A673 (cell line): ENCODE measurements at regions of chr11 and their contacts with region 1.

Region 1: GRCh38 chr11:130580372-130580771 is 131.9 kb downstream of the ADAMTS15 start:
- DNase-seq: peak; percentile 84
- H3K4me3 ChIP-seq: no peak overlapping the region
- H3K27ac ChIP-seq: no peak overlapping the region
- H3K4me1 ChIP-seq: peaks cover 15% of the 10 kb centered on the region
- H3K27me3 ChIP-seq: no peaks in the 10 kb centered on the region
- CTCF ChIP-seq: no peak

Region 2: GRCh38 chr11:130644187-130644586 is 63.8 kb after region 1 on chr11:
- CTCF ChIA-PET with region 1: no interaction called
- POLR2A ChIA-PET with region 1: no interaction called
- intact Hi-C with region 1: no loop called
- DNase-seq: no peak
- H3K4me3 ChIP-seq: no peak overlapping the region
- H3K27ac ChIP-seq: no peak overlapping the region
- H3K4me1 ChIP-seq: no peaks in the 10 kb centered on the region
- H3K27me3 ChIP-seq: no peaks in the 10 kb centered on the region
- CTCF ChIP-seq: no peak

Region 3: DNA sequence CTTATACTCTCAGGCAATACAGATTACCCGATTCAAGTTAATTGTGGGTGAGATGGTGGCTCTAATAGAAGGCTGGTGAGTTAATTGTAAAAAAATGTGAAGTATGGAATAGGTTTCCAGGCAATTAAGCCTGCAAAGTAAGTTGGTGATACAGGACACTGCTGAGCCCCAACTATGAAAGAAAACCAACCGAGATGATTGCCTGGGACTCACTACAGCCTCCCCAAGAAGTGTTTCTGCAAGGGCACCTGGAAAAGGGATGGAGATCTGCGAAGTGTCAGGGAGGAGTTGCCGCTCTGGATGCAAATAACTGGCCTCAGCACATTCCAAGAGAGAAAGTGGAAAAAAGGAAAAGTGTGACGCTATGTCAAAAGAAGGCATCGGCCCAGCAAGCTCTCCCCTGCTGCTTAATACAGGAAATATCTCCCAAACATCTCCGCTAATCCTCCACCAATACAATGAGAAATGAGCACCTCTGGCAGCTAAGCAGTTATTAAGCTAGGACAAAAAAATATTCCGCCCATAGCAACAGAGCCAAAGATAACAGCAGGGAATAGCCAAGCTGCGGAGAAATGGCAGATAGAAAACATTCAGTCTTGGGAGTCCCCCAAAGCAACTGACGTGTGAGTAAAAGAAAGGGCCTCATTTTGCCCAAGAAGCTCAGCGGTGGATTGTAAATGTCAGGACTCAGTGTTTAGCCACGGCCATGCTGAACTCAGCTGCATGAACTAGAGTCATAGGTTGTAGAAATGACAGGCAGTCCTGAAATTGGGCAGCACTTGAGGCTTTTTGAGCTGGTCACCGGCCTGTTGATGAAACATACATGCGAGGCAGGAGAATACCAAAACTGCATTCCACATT is 202.2 kb after region 1 on chr11:
- CTCF ChIA-PET with region 1: no interaction called
- POLR2A ChIA-PET with region 1: interaction called, 3 read pairs
- intact Hi-C with region 1: loop called (anchors 5 kb)
- DNase-seq: peak; percentile 95
- H3K4me3 ChIP-seq: peak overlapping the region; percentile 5
- H3K27ac ChIP-seq: peak overlapping the region; percentile 83
- H3K4me1 ChIP-seq: peaks cover 27% of the 10 kb centered on the region
- H3K27me3 ChIP-seq: no peaks in the 10 kb centered on the region
- CTCF ChIP-seq: no peak